Activated T-helper 1 cell treated with anti-CD3 and anti-CD28 coated beads, Interleukin-12 subunit alpha, Interleukin-12 subunit beta, Interleukin-2, Interleukin-4 antibody, amounts not matched to agents 30 ng/mL and 10 ng/mL and 1 ng/mL, durations not matched to agents 14 hours and 24 hours and 36 hours (primary cell): ENCODE measurements at regions of chr11 and their contacts with region 1.

Region 1: GRCh38 chr11:78635814-78636506 is 61.3 kb upstream of the NARS2 start:
- DNase-seq: no peak
- H3K4me3 Mint-ChIP-seq: no peak overlapping the region
- H3K27ac Mint-ChIP-seq: peak overlapping the region; percentile 74
- H3K4me1 Mint-ChIP-seq: peaks cover 21% of the 10 kb centered on the region
- H3K27me3 Mint-ChIP-seq: no peaks in the 10 kb centered on the region

Region 2: GRCh38 chr11:78651923-78652842 is 16.2 kb after region 1 on chr11:
- intact Hi-C with region 1: loop called (anchors 1 kb)
- DNase-seq: no peak
- H3K4me3 Mint-ChIP-seq: peak overlapping the region; percentile 67
- H3K27ac Mint-ChIP-seq: peak overlapping the region; percentile 93
- H3K4me1 Mint-ChIP-seq: peaks cover 23% of the 10 kb centered on the region
- H3K27me3 Mint-ChIP-seq: peaks cover 3% of the 10 kb centered on the region